ENCODE measurements at regions of chr11 and their contacts with region 1.

Region 1: GRCh38 chr11:12411806-12412727 is 34.7 kb downstream of the PARVA start:
- DNase-seq: peak; percentile 57 to 78
- ATAC-seq: peak; percentile 73 to 93 (median 85)
- H3K4me3 ChIP-seq: no peak overlapping the region
- H3K27ac ChIP-seq: peak overlapping the region in 4 of 10 donors; percentile 4 to 31 (median 10)
- H3K4me1 ChIP-seq: peaks cover 3 to 79% (median 53%) of the 10 kb centered on the region in 9 donors
- H3K27me3 ChIP-seq: no peaks in the 10 kb centered on the region
- CTCF ChIP-seq: peak; percentile 67 to 88 (median 80)

Region 2: DNA sequence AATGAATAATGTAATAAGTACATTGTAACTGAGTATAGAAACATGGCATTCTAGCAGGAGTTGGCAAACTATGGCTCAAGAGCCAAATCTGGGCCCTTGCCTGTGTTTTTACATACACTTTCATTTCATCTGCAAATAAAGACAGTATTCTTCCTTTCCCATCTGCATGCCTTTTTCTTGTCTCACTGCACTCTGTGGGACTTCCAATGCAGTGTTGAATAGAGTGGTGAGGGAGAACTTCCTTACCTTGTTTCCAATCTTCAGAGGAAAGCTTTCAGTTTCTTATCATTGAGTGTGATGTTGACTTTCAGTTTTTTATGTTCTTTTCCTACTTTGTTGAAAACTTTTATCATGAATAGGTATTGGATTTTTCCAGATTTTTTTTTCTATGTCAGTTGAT is 488.2 kb before region 1 on chr11:
- intact Hi-C with region 1: no loop called
- DNase-seq: no peak
- ATAC-seq: no peak
- H3K4me3 ChIP-seq: no peak overlapping the region
- H3K27ac ChIP-seq: peak overlapping the region in 1 of 10 donors; percentile 1
- H3K4me1 ChIP-seq: peaks cover 0 to 14% (median 0%) of the 10 kb centered on the region in 9 donors
- H3K27me3 ChIP-seq: no peaks in the 10 kb centered on the region
- CTCF ChIP-seq: no peak

Region 3: DNA sequence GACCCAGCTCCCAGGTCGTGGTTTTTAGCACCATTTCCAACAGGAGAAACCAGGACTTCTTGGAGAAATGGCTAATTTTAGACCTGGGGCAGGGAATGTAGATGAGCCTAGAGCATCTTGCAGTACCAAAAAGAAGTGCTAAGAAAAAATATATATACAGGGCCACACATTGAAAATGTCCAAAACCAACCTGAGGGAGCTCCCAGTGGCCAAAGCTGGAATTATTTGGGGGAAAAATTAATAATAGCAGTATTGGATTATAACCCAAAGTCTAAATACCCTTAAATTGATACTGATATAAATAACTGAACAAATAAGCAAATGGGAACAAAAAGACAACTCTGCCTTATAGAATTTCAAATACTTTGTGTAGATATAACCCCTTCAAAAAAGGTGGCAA is 73.3 kb after region 1 on chr11:
- intact Hi-C with region 1: loop called in 3 of 10 experiments (anchors 5 to 10 kb)
- DNase-seq: no peak
- ATAC-seq: no peak
- H3K4me3 ChIP-seq: no peak overlapping the region
- H3K27ac ChIP-seq: no peak overlapping the region
- H3K4me1 ChIP-seq: peaks cover 2 to 22% (median 14%) of the 10 kb centered on the region in 9 donors
- H3K27me3 ChIP-seq: no peaks in the 10 kb centered on the region
- CTCF ChIP-seq: peak in 8 of 9 donors; percentile 13 to 44 (median 32)

Region 4: DNA sequence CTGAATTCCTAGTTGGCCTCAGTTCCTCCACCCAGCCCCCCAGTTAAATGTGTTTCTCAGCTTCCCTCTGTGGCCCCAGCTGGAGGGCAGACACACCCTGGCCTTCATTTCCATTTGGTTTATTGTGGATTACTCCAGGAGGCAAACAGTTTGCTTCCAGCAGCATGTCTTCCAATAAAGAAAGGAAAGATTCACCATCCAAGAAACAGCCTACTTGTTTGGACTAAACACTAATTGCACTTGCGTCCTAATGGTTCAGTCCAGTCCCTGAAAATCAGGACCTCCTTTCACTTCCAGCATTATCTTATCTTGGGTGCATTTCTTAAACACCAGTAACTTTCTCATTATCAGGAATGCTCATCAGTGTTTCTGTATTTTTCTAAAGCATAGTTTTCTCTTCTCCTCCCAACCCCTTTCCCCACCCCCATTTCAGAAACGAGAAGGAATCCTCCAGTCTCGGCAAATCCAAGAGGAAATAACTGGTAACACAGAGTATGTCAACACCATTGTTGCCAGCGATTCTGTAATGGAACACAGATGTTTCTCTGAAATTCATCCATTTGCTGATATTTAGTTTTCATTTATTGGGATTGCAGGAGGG is 96.2 kb after region 1 on chr11:
- intact Hi-C with region 1: no loop called
- DNase-seq: peak in 1 of 2 donors; percentile 34
- ATAC-seq: peak in 7 of 8 donors; percentile 53 to 79 (median 74)
- H3K4me3 ChIP-seq: no peak overlapping the region
- H3K27ac ChIP-seq: peak overlapping the region in 4 of 10 donors; percentile 18 to 51 (median 40)
- H3K4me1 ChIP-seq: peaks cover 0 to 37% (median 5%) of the 10 kb centered on the region in 9 donors
- H3K27me3 ChIP-seq: no peaks in the 10 kb centered on the region
- CTCF ChIP-seq: no peak

Region 5: DNA sequence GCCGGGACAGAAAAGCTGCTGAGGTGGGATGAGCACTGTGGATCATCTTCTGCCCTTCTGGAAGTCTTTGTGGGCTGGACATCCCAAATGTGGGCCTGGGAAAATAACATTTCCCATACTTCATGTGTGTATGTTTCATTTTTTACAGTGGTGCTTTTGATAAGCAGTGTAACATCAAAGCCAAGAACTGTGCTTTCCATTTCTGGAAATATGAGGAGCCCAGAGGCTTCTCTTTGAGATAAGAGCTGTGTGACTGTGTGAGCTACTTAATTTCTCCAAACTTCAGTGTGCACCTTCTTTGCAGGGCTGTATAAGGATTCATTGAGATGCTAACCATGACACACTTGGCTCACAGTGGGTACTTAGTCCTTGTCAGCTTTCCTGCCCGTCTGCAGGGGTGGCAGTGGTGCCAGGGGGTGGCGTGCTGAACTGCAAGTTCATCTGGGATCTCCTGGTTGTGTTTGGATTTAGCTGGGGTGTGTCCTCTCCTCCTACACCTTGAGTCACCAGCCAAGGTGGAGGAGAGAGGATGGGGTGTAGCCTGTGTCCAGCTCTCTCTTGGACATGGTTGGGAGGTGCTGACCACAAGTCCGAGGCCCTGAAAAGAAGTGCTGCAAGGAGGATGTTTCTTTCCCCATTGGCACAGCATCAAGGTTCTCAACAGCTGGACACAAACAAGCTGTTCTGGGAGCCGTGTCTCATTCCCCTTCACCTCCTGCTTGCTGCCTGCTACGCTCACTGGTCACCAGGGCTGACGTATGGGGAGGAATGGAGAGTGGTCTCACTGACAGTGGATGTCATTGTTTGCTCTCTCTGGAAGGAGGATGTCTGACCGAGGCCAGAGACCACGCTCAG is 401.5 kb after region 1 on chr11:
- intact Hi-C with region 1: loop called in 1 of 10 experiments (anchors 10 kb)
- DNase-seq: peak in 1 of 2 donors; percentile 24
- ATAC-seq: peak; percentile 12 to 50 (median 32)
- H3K4me3 ChIP-seq: no peak overlapping the region
- H3K27ac ChIP-seq: peak overlapping the region in 8 of 10 donors; percentile 10 to 78 (median 54)
- H3K4me1 ChIP-seq: peaks cover 15 to 77% (median 60%) of the 10 kb centered on the region in 9 donors
- H3K27me3 ChIP-seq: no peaks in the 10 kb centered on the region
- CTCF ChIP-seq: peak in 1 of 9 donors; percentile 13

Region 6: GRCh38 chr11:12827929-12828812 is 416.1 kb after region 1 on chr11:
- intact Hi-C with region 1: loop called in 1 of 10 experiments (anchors 10 kb)
- DNase-seq: peak in 1 of 2 donors; percentile 31
- ATAC-seq: peak; percentile 63 to 84 (median 80)
- H3K4me3 ChIP-seq: peak overlapping the region in 9 of 10 donors; percentile 19 to 58 (median 51)
- H3K27ac ChIP-seq: peak overlapping the region in 9 of 10 donors; percentile 36 to 80 (median 58)
- H3K4me1 ChIP-seq: peaks cover 3 to 63% (median 47%) of the 10 kb centered on the region in 9 donors
- H3K27me3 ChIP-seq: peaks cover 0 to 21% (median 0%) of the 10 kb centered on the region in 7 donors
- CTCF ChIP-seq: no peak

Measured in heart right ventricle (tissue), 16 donors.